Motor neuron (in vitro differentiated cells): ENCODE measurements at regions of chr6 and their contacts with region 1.

Region 1: GRCh38 chr6:157323255-157323965 is at the start of gene TMEM242:
- ATAC-seq: peak; percentile 91 to 96 (median 94)
- H3K4me3 ChIP-seq: peak within 1 kb of the TSS; percentile 70 to 97 (median 83)
- H3K27ac ChIP-seq: peak within 1 kb of the TSS; percentile 86 to 89
- H3K4me1 ChIP-seq: peaks cover 3 to 14% of the 10 kb centered on the region in 2 donors
- total RNA-seq, gene TMEM242: 9.6 to 16.9 (median 11.5) TPM

Region 2: GRCh38 chr6:158044525-158044888 is 721.1 kb after region 1 on chr6:
- in situ Hi-C with region 1: no loop called
- ATAC-seq: no peak
- H3K4me3 ChIP-seq: no peak overlapping the region
- H3K27ac ChIP-seq: no peak overlapping the region
- H3K4me1 ChIP-seq: peaks cover 7 to 18% of the 10 kb centered on the region in 2 donors

Region 3: DNA sequence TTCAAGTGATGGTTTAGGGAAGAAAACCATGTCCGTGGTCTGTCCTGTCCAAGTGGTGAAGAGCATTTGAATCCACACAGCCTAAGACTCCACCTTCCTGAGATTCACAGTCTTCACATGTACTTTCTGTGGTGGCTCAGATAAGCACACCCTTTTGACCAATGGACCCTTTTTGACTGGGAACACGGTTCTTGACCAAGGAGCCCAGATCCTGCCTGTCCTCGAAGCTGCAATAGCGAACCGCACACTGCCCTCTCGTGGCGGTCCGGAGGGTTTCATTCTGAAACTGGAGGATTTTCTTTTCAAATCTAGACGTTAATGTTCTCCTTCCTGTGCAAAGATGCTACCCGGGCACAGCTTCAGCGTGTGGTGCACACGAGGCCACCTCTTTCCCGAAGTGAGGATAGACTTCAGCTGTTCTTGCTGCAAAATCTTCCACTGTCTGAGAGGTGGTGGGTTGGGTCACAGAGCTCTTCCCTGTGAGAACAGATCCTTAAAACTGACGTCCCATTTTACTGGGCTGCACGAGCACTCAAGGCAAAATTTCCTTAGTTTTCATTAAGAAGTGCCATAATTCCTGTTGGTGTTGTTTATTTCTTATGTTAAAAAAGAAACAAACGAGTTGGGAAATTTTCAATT is 748.8 kb after region 1 on chr6:
- in situ Hi-C with region 1: loop called in 1 of 9 experiments (anchors 25 kb)
- ATAC-seq: peak; percentile 66 to 87 (median 82)
- H3K4me3 ChIP-seq: no peak overlapping the region
- H3K27ac ChIP-seq: no peak overlapping the region
- H3K4me1 ChIP-seq: peaks cover 0 to 2% of the 10 kb centered on the region in 2 donors